ENCODE measurements at regions of chr13 and their contacts with region 1.

Region 1: GRCh38 chr13:75687150-75687763 is 51.1 kb downstream of the LMO7 start:
- DNase-seq: peak; percentile 73
- ATAC-seq: peak; percentile 8
- H3K4me3 ChIP-seq: no peak overlapping the region
- H3K27ac ChIP-seq: peak overlapping the region; percentile 100
- H3K4me1 ChIP-seq: peaks cover 45% of the 10 kb centered on the region
- H3K27me3 ChIP-seq: no peaks in the 10 kb centered on the region
- CTCF ChIP-seq: peak; percentile 67

Region 2: DNA sequence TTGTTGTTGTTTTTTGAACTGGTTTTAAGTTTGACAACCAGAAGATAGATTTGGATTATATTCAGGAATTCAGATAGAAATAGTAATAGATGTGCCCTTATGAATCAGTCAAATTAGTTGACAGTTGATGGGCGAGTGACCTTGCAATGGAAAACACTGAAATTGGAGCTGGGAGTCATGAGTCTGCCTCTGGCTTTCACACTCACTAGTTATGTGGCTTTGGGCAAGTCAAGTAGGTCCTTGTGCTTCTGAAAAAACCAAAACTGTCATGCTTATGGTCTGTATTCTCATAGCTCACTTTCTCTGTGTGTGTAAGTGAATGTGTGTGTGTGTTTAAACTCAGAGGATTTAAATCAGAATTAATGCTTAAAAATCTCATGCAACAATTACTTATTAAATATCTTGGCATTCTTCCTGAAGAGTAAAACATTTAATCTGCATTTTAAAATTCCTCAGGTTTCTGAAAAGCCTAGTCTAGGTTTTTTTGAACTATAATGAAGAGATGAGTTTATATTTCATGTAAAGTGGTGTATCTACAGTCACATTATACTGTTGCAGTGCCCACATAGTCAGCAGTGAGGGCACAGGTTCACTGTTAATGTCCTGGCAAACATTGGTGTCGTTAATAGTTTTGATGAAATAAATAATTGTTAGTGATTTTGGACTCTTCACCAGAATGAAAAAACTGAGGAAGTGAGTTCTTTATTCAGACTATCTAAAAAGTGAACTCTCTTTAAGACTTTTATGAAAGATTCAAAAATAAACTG is 105.2 kb before region 1 on chr13:
- CTCF ChIA-PET with region 1: no interaction called
- POLR2A ChIA-PET with region 1: no interaction called
- intact Hi-C with region 1: no loop called
- DNase-seq: no peak
- ATAC-seq: no peak
- H3K4me3 ChIP-seq: no peak overlapping the region
- H3K27ac ChIP-seq: no peak overlapping the region
- H3K4me1 ChIP-seq: no peaks in the 10 kb centered on the region
- H3K27me3 ChIP-seq: no peaks in the 10 kb centered on the region
- CTCF ChIP-seq: no peak

Region 3: DNA sequence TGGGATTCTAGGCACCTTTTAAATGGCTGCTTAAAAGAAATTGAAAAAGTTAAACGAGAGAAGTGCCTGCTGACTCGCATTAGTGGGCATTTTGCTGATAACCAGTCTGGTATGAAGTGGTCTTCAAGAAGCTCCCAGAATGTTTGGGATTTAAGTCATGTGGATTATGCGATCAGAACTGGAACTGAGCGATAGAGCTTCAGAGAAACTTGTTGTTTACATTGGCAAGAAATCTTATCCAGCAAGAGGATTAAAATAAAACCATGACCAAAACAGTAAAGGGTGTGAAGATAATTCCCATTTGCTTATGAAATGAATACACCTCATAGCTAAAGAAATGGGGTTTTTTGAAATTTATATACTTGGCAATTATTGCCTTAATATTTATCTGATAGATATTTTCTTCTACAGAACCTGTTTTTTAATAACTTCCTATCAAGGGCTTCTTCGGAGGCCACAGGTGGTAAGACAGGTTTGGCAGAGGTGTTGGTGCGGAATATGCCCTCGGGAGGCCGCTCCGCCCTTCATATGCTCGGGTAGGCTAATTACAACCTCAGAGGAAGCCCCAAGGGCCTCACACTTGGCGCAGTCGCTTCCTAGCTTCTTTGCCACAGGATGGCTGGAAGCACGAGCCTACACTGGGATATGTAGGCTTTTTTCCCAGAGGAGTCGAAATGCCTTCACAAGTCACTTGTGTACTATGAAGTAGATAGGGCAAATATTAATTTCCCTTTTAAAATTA is 17.5 kb after region 1 on chr13:
- CTCF ChIA-PET with region 1: no interaction called
- POLR2A ChIA-PET with region 1: no interaction called
- intact Hi-C with region 1: loop called (anchors 2 kb)
- DNase-seq: peak; percentile 74
- ATAC-seq: peak; percentile 75
- H3K4me3 ChIP-seq: peak overlapping the region; percentile 53; the same call in 1 of the 2 replicates
- H3K27ac ChIP-seq: peak overlapping the region; percentile 100
- H3K4me1 ChIP-seq: peaks cover 34% of the 10 kb centered on the region
- H3K27me3 ChIP-seq: no peaks in the 10 kb centered on the region
- CTCF ChIP-seq: no peak

Region 4: DNA sequence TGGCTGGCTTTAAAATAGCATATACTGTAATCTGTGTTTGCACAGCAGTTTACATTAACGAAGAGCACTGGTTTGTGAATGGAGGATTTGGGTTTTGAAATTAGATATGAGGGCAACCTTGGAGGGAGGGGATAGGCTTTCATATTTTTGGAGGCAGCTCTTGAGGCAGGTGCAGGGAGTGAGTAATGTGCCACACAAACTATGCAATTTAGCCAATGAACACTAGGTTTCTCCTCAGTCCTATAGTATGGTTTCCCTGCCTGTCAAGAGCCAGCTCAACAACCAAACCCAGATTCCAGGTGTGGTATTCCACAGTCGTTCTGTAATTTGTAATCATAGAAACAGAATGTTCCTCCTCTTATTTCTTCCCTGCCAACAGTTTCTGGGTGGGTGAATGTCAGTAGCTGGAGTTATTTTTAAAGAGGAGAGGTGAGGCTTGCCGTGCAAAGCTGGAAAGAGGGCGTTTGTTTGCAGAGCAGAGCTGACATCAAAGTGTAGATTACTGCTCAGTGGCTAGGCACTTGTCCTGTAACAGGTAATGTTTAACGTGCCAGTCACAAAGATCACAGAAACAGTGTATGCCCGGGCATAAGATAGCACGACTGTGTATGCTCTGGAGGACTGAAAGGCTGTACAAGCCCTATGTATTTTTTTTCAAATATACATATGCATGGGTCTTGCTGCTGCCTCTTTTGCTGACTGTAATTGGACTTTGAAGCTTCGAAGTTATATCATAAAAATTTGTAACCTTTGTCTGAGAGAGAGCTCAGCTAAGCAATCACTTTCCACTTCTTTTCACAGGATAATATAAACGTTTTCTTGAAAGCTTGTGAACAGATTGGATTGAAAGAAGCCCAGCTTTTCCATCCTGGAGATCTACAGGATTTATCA is 73.1 kb after region 1 on chr13:
- CTCF ChIA-PET with region 1: interaction called, 3 read pairs
- POLR2A ChIA-PET with region 1: no interaction called
- intact Hi-C with region 1: loop called (anchors 2 kb)
- DNase-seq: peak; percentile 76
- ATAC-seq: peak; percentile 87
- H3K4me3 ChIP-seq: peak overlapping the region; percentile 67
- H3K27ac ChIP-seq: peak overlapping the region; percentile 85
- H3K4me1 ChIP-seq: peaks cover 22% of the 10 kb centered on the region
- H3K27me3 ChIP-seq: no peaks in the 10 kb centered on the region
- CTCF ChIP-seq: peak; percentile 33

Region 5: GRCh38 chr13:75870397-75870903 is 183.2 kb after region 1 on chr13:
- CTCF ChIA-PET with region 1: no interaction called
- POLR2A ChIA-PET with region 1: no interaction called
- intact Hi-C with region 1: loop called (anchors 2 kb)
- DNase-seq: peak; percentile 56
- ATAC-seq: peak; percentile 30
- H3K4me3 ChIP-seq: peak overlapping the region; percentile 84
- H3K27ac ChIP-seq: no peak overlapping the region
- H3K4me1 ChIP-seq: peaks cover 6% of the 10 kb centered on the region
- H3K27me3 ChIP-seq: no peaks in the 10 kb centered on the region
- CTCF ChIP-seq: peak; percentile 82

Region 6: DNA sequence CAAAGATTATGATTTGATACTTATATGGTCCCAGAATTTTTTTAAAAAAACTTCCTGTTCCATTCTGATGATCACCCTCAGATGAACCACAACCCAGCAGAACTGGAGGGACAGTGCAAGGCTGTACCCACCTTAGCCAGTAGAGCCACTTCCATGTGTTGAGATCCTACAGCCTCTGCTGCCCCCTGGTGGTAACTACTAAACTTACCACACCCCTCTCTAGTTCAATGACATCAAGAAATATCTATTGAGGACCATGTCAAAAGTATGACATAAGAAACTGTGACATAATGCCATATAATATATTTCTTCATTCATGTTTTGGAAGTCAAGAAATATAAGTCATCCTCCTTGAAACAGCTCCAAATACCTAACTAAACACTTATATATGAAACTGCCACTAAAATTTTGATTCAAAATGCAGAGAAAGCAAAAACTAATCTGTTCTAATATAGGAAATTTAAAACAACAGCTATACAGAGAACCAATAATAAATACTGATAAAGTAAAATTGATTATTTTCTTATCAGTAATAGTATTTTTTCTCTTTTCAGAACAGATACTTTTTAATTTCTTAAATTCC is 786.4 kb after region 1 on chr13:
- CTCF ChIA-PET with region 1: no interaction called
- POLR2A ChIA-PET with region 1: no interaction called
- intact Hi-C with region 1: loop called (anchors 5 kb)
- DNase-seq: peak; percentile 79
- ATAC-seq: peak; percentile 93
- H3K4me3 ChIP-seq: no peak overlapping the region
- H3K27ac ChIP-seq: no peak overlapping the region
- H3K4me1 ChIP-seq: no peaks in the 10 kb centered on the region
- H3K27me3 ChIP-seq: no peaks in the 10 kb centered on the region
- CTCF ChIP-seq: peak; percentile 80

Measured in PC-3 (cell line).